Naive thymus-derived CD4-positive, alpha-beta T cell (primary cell): ENCODE measurements at regions of chr12 and their contacts with region 1.

Region 1: DNA sequence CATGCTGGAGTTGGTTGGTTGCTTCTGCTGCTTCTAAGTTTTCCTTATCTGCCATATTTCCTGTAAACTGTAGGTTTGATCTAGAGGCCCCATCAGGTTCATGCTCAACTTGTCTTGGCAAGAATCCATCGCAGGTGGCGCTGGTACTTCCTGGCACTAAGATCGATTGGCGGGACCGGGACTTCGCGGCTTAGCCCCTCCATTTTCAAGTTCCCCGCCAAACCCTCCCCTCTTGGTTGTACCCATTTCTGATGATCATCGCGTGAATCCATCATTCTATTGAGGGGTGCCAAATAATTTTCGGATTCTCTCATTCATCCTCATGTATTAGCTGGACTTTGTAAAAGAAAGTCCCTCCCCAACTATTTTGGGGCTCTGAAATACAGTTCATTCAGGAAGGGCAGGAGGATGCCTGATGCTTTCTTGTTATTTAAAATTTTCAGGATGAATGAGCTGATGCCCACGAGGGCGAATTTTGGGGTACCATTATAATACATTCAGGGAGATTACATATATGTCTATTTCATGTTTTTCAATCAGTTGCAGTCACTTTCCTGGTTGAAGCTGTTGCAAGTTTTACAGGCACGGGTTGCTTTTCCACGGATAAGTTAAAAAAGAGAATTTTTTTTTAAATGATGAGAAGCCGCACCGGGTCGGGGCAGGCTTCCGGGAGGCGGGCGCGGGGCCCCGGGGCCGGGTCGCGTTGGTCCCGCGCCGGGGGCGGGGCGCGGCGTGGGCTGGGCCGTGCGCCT is 395 bp upstream of the BRI3BP start:
- DNase-seq: peak; percentile 67 to 86 (median 81)
- ATAC-seq: peak; percentile 82
- H3K4me3 ChIP-seq: peak overlapping the region; percentile 67
- H3K4me3 Mint-ChIP-seq: peak overlapping the region; percentile 79 to 97 (median 86)
- H3K27ac ChIP-seq: peak overlapping the region; percentile 62
- H3K27ac Mint-ChIP-seq: peak overlapping the region; percentile 14 to 85 (median 80)
- H3K4me1 ChIP-seq: peaks cover 11 to 29% of the 10 kb centered on the region in 2 donors
- H3K4me1 Mint-ChIP-seq: peaks cover 25 to 42% (median 34%) of the 10 kb centered on the region in 7 donors
- H3K27me3 ChIP-seq: no peaks in the 10 kb centered on the region
- H3K27me3 Mint-ChIP-seq: no peaks in the 10 kb centered on the region

Region 2: DNA sequence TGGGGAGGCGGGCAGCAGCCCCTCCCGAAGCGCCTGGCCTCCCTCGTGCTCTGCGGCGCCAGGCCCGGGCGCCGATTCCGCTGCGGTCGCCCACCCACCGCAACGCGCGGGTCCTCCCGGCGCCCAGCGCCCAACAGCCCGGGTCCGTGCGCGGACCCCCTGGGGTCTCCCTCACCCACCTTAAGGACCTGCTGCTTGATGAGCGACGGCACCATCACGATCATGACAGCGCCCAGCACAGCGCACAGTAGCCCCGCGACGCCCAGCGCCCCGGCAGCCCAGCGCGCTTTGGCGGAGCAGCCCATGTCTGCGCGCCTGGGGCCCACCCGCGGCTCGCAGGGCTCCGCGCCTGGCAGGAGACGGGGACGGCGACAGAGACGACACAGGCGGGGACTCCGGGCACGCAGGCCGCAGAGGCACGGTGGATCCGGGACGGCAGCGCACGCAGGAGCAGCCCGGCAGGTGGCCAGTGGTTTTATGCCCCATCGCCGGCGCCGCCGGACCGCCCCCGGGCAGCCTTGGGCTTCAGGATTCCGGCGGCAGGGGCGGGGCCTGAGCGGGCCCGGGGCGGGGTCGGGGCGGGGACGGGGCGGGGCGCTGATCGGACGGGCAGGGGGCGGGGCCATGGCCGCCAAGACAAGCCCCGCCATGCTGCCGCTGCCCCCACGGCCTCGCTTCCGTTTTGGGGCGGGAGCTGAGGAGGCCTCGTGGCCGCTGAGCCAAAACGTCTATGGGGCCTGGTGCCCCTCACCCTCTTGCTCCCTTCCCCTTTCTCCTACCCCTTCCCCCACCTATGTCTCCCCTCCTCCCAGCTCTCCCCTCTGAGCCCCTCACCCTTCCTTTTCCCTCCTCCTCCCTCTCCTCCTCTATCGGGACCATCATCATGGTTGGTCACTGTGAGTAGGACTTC is 129.4 kb before region 1 on chr12 and contains the start of gene SCARB1:
- CTCF ChIA-PET with region 1: no interaction called
- POLR2A ChIA-PET with region 1: no interaction called
- intact Hi-C with region 1: loop called (anchors 1 to 5 kb)
- DNase-seq: peak; percentile 60 to 84 (median 72)
- ATAC-seq: peak; percentile 95
- H3K4me3 ChIP-seq: peak within 1 kb of the TSS; percentile 74
- H3K4me3 Mint-ChIP-seq: peak within 1 kb of the TSS; percentile 70 to 94 (median 81)
- H3K27ac ChIP-seq: peak within 1 kb of the TSS; percentile 58
- H3K27ac Mint-ChIP-seq: peak within 1 kb of the TSS; percentile 66 to 94 (median 83)
- H3K4me1 ChIP-seq: no peaks in the 10 kb centered on the region
- H3K4me1 Mint-ChIP-seq: peaks cover 9 to 25% (median 14%) of the 10 kb centered on the region in 7 donors
- H3K27me3 ChIP-seq: no peaks in the 10 kb centered on the region
- H3K27me3 Mint-ChIP-seq: peaks cover 0 to 8% (median 3%) of the 10 kb centered on the region in 5 donors
- total RNA-seq, gene SCARB1: 2.5 to 7.1 (median 4.3) TPM

Region 3: DNA sequence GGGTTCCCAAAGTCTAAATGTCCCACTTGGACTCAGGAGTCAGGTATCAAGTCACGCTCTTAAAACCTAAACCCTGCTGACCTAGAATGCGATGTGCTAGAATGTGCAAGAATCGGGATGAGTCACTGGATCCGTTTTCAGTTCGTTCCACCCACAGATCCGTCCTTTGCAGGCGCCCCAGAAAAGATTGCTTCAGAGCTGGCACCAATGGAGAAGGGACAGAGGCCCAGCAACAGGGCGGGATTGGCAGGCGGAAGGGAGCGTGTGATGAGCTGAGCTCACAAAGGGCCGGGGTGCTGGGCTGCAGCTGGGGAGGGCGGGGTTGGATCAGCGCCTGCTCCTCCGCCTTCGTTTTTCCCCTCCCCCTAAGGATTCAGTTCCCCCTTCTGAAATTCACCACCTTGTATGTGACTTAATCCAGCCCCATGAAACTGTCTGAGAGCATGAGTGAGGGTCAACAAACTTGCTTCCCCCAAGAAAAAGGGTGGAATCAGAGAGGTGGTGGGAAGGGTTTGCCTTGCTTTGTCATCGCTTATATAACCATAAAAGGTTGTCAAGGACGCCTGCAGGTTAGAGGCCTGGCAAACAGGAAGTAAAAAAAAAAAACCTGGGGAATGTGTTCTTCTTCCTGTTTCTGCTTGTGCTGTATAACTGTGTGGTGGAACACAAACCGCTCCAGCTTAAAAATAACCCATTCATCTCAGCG is 75.8 kb before region 1 on chr12:
- CTCF ChIA-PET with region 1: interaction called, 3 read pairs
- POLR2A ChIA-PET with region 1: interaction called, 10 read pairs
- intact Hi-C with region 1: loop called (anchors 1 to 5 kb)
- DNase-seq: peak; percentile 73 to 97 (median 93)
- ATAC-seq: peak; percentile 81
- H3K4me3 ChIP-seq: peak overlapping the region; percentile 60
- H3K4me3 Mint-ChIP-seq: peak overlapping the region; percentile 83 to 100 (median 88)
- H3K27ac ChIP-seq: peak overlapping the region; percentile 84
- H3K27ac Mint-ChIP-seq: peak overlapping the region; percentile 90 to 100 (median 98)
- H3K4me1 ChIP-seq: peaks cover 57 to 70% of the 10 kb centered on the region in 2 donors
- H3K4me1 Mint-ChIP-seq: peaks cover 64 to 98% (median 90%) of the 10 kb centered on the region in 7 donors
- H3K27me3 ChIP-seq: no peaks in the 10 kb centered on the region
- H3K27me3 Mint-ChIP-seq: peaks cover 0 to 16% (median 0%) of the 10 kb centered on the region in 5 donors

Region 4: DNA sequence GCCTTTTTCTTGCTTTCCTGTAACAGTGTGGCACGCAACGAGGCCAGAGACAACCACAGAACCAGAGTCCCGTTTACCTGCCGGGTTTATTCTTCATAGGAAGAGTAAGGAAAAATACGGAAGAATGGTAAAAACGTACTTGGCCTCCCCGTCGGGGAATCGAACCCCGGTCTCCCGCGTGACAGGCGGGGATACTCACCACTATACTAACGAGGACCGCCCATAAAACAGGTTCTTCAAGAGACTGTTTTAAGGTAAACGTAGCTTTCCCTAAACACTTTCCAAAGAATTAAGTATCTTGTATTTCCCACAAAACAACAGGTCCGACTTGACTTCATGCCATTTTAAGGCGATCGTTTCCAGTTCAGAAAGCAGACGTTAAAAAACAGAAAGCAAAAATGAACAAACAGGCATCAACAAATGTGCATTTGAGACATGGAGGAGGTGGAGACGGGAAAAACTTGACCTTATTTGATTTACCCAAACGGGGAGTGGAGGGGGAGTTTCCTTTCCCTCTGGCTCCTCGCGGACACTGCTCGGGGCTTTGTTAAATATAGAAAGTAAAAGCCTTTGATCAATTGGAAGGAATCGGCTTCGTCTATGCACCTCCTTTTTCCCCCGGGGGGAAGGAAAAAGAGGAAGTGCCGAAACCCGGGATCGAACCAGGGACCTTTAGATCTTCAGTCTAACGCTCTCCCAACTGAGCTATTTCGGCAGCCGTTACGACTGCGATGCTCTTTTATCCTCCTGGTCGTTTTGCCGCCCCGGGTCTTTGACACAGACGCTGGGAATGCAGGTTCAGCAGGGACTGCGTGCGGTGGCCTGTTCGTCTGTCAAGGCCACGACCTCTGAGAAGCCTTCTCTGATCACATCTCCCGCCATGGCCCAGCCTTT is 65.6 kb before region 1 on chr12:
- CTCF ChIA-PET with region 1: no interaction called
- POLR2A ChIA-PET with region 1: interaction called, 7 read pairs
- intact Hi-C with region 1: loop called in 1 of 2 experiments (anchors 2 kb)
- DNase-seq: peak; percentile 86 to 95 (median 92)
- ATAC-seq: peak; percentile 93
- H3K4me3 ChIP-seq: peak overlapping the region; percentile 91
- H3K4me3 Mint-ChIP-seq: peak overlapping the region; percentile 84 to 97 (median 93)
- H3K27ac ChIP-seq: peak overlapping the region; percentile 65
- H3K27ac Mint-ChIP-seq: peak overlapping the region; percentile 90 to 100 (median 98)
- H3K4me1 ChIP-seq: peaks cover 15 to 18% of the 10 kb centered on the region in 2 donors
- H3K4me1 Mint-ChIP-seq: peaks cover 18 to 37% (median 32%) of the 10 kb centered on the region in 7 donors
- H3K27me3 ChIP-seq: no peaks in the 10 kb centered on the region
- H3K27me3 Mint-ChIP-seq: peaks cover 0 to 9% (median 0%) of the 10 kb centered on the region in 5 donors

Region 5: DNA sequence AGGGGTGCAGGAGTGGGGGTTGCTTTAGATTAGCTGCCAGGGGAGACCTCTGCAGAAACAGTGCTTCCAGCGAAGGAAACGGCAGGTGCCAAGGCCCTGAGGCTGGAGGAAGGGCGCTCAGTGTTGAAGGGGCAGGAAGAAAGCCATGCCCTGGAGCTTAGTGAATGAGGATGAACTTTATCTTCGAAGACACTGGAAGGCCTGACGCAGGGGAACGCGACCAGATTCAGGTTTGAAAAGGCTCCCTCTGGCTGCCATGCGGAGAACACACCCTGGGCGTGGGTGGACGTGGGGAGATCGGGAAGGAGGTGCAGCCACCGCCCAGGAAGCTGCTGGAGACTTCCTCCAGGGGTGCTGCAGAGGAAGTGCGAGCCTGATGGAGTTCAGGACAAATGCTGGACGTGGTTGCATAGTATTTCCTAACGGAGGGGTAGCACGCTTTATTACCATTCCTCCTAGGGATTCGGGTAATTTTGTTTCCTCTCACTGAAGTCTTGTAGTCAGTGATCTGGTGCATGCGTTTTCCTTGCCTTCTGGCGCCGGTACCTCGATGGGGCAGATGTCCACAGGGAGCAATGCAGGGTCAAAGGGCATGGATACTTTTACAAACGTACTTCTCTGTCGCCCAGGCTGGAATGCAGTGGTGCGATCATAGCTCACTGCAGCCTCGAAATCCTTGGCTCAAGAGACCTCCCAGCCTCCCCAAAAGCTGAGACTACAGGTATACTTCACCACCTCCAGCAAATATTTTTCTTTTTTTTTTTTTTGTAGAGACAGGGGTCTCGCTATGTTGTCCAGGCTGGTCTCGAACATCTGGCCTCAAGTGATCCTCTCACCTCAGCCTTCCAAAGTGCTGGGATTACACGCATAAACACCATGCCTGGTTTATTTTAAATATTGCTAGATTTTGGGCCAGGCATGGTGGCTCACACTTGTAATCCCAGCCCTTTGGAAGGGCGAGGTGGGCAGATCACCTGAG is 52.2 kb before region 1 on chr12:
- CTCF ChIA-PET with region 1: interaction called, 3 read pairs
- POLR2A ChIA-PET with region 1: interaction called, 3 read pairs
- intact Hi-C with region 1: loop called (anchors 1 kb)
- DNase-seq: peak; percentile 48 to 85 (median 78)
- ATAC-seq: peak; percentile 74
- H3K4me3 ChIP-seq: peak overlapping the region; percentile 97
- H3K4me3 Mint-ChIP-seq: no peak overlapping the region
- H3K27ac ChIP-seq: peak overlapping the region; percentile 66
- H3K27ac Mint-ChIP-seq: no peak overlapping the region
- H3K4me1 ChIP-seq: peaks cover 19 to 26% of the 10 kb centered on the region in 2 donors
- H3K4me1 Mint-ChIP-seq: peaks cover 0 to 22% (median 0%) of the 10 kb centered on the region in 7 donors
- H3K27me3 ChIP-seq: no peaks in the 10 kb centered on the region
- H3K27me3 Mint-ChIP-seq: no peaks in the 10 kb centered on the region

Region 6: GRCh38 chr12:125049093-125049458 is 56.0 kb after region 1 on chr12:
- CTCF ChIA-PET with region 1: interaction called, 3 read pairs
- POLR2A ChIA-PET with region 1: interaction called, 10 read pairs
- intact Hi-C with region 1: loop called (anchors 1 kb)
- DNase-seq: no peak
- ATAC-seq: no peak
- H3K4me3 ChIP-seq: peak overlapping the region; percentile 94
- H3K4me3 Mint-ChIP-seq: peak overlapping the region; percentile 78 to 97 (median 92)
- H3K27ac ChIP-seq: peak overlapping the region; percentile 71
- H3K27ac Mint-ChIP-seq: peak overlapping the region; percentile 42 to 95 (median 92)
- H3K4me1 ChIP-seq: peaks cover 0 to 5% of the 10 kb centered on the region in 2 donors
- H3K4me1 Mint-ChIP-seq: peaks cover 0 to 11% (median 7%) of the 10 kb centered on the region in 7 donors
- H3K27me3 ChIP-seq: no peaks in the 10 kb centered on the region
- H3K27me3 Mint-ChIP-seq: no peaks in the 10 kb centered on the region

Region 7: GRCh38 chr12:125065021-125065795 is 72.2 kb after region 1 on chr12 and contains the start of gene AACS:
- CTCF ChIA-PET with region 1: no interaction called
- POLR2A ChIA-PET with region 1: interaction called, 7 read pairs
- intact Hi-C with region 1: loop called (anchors 1 kb)
- DNase-seq: peak; percentile 50 to 81 (median 69)
- ATAC-seq: peak; percentile 99
- H3K4me3 ChIP-seq: peak within 1 kb of the TSS; percentile 69
- H3K4me3 Mint-ChIP-seq: peak within 1 kb of the TSS; percentile 72 to 92 (median 86)
- H3K27ac ChIP-seq: peak within 1 kb of the TSS; percentile 83
- H3K27ac Mint-ChIP-seq: peak within 1 kb of the TSS; percentile 42 to 88 (median 64)
- H3K4me1 ChIP-seq: no peaks in the 10 kb centered on the region
- H3K4me1 Mint-ChIP-seq: peaks cover 9 to 25% (median 20%) of the 10 kb centered on the region in 7 donors
- H3K27me3 ChIP-seq: no peaks in the 10 kb centered on the region
- H3K27me3 Mint-ChIP-seq: peaks cover 0 to 21% (median 3%) of the 10 kb centered on the region in 5 donors
- total RNA-seq, gene AACS: 11.6 to 21.7 (median 14.8) TPM